ENCODE measurements at regions of chr1 and their contacts with region 1.

Region 1: GRCh38 chr1:51897699-51898031 is 19.1 kb upstream of the NRDC start:
- DNase-seq: no peak
- H3K4me3 Mint-ChIP-seq: no peak overlapping the region
- H3K27ac Mint-ChIP-seq: no peak overlapping the region
- H3K4me1 Mint-ChIP-seq: peaks cover 2% of the 10 kb centered on the region
- H3K27me3 Mint-ChIP-seq: peaks cover 25% of the 10 kb centered on the region

Region 2: DNA sequence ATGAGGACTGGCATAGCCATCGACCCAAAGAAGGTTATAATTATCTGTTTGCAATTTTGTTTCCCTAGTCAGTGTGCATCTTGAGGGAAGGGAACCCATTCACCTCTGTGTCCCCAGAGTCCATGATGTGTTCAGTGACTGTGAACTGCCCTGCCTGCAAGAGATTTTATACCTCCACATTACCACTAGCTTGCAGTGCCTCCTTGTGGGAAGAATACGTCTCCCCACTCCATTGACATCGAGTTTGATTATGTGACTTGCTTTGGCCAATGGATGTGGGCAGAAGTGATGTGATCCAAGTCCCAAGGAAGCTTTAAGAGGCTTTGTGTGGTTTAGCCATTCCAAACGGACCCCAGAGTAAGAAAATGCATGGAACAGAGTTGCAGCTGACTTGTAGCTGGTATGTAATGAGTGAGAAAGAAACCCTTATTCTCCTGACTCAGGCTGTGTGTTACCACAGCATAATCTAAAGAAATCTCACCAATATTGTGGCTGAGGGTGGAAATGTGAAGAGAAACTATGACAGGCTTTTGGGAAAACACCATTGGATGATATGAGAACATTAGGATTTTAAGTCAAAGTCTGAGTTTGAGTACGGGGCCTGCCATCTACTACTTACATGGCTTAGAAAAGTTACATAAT is 28.6 kb after region 1 on chr1:
- CTCF ChIA-PET with region 1: interaction called, 12 read pairs
- intact Hi-C with region 1: loop called (anchors 2 kb)
- DNase-seq: peak; percentile 18
- H3K4me3 Mint-ChIP-seq: no peak overlapping the region
- H3K27ac Mint-ChIP-seq: no peak overlapping the region
- H3K4me1 Mint-ChIP-seq: no peaks in the 10 kb centered on the region
- H3K27me3 Mint-ChIP-seq: no peaks in the 10 kb centered on the region

Region 3: DNA sequence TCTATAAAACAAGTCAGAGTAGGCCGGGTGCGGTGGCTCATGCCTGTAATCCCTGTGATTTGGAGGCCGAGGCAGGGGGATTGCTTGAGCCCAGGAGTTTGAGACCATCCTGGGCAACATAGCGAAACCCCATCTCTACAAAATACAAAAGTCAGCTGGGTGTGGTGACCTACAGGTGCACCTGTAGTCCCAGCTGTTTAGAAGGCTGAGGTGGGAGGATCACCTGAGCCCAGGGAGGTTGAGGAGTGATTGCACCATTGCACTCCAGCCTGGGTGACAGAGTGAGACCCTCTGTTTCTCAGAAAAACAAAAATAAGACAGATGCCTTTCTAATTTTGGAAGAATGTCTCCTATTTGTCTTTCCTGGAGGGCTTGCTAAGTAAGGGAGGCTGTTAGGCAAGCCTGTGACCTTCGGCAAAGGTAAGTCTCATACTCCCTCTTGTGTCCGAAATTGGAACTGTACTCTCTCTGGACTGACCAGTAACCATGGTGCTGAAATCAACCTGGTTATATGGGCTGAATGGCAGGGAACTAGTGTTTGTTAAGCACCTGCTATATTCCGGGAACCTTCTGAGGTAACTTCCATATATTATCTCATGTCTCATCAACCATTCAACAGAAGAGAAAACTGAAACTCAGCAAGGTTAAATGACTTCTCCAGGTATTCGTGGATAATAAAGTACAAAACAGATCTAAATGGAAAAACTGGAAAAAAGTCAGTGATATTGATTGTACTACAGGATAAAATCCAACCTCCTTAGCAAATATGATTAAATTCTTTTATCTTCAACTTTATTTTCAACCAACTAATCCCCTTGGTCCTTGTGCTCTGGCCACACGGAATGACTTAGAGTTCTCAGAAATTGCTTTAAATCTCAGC is 104.6 kb after region 1 on chr1:
- CTCF ChIA-PET with region 1: interaction called, 10 read pairs
- intact Hi-C with region 1: loop called (anchors 1 kb)
- DNase-seq: peak; percentile 68
- H3K4me3 Mint-ChIP-seq: no peak overlapping the region
- H3K27ac Mint-ChIP-seq: no peak overlapping the region
- H3K4me1 Mint-ChIP-seq: no peaks in the 10 kb centered on the region
- H3K27me3 Mint-ChIP-seq: peaks cover 15% of the 10 kb centered on the region

Region 4: DNA sequence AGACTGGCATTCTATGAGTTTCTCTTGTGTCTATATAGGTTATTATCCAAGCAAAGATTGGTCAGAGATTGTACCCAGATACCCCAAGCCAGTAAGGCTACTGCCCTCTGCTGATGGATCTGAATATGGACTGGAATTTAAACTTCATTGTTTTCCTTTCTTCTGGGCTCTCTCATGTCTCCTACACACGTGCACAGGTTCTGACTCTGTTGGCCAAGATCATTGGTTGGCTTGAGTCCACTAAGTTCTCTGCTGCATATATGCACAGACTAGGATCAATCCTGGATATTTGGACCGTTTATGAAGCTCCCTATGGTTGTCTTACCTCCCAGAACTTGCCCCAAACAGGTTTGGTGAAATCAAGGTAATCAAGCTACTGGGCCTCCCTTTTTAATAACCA is 398.7 kb after region 1 on chr1:
- CTCF ChIA-PET with region 1: no interaction called
- intact Hi-C with region 1: loop called (anchors 5 kb)
- DNase-seq: peak; percentile 13
- H3K4me3 Mint-ChIP-seq: no peak overlapping the region
- H3K27ac Mint-ChIP-seq: peak overlapping the region; percentile 39
- H3K4me1 Mint-ChIP-seq: peaks cover 2% of the 10 kb centered on the region
- H3K27me3 Mint-ChIP-seq: no peaks in the 10 kb centered on the region

Measured in activated naive CD4-positive, alpha-beta T cell treated with anti-CD3 and anti-CD28 coated beads for 36 hours (primary cell).